ENCODE measurements at regions of chr19 and their contacts with region 1.

Region 1: GRCh38 chr19:43934985-43935708 is at the start of gene ZNF45:
- DNase-seq: peak; percentile 90
- H3K4me3 Mint-ChIP-seq: peak within 1 kb of the TSS; percentile 90
- H3K27ac Mint-ChIP-seq: peak within 1 kb of the TSS; percentile 67
- H3K4me1 Mint-ChIP-seq: peaks cover 5% of the 10 kb centered on the region
- H3K27me3 Mint-ChIP-seq: no peaks in the 10 kb centered on the region
- CTCF ChIP-seq: no peak
- total RNA-seq, gene ZNF45: 8.1 and 9.9 TPM in 2 replicates

Region 2: GRCh38 chr19:43950834-43951645 is 15.9 kb after region 1 on chr19 and contains the start of gene ZNF221:
- CTCF ChIA-PET with region 1: interaction called, 7 read pairs
- POLR2A ChIA-PET with region 1: interaction called, 32 read pairs
- intact Hi-C with region 1: loop called (anchors 1 kb)
- DNase-seq: peak; percentile 97
- H3K4me3 Mint-ChIP-seq: peak within 1 kb of the TSS; percentile 96
- H3K27ac Mint-ChIP-seq: peak within 1 kb of the TSS; percentile 91
- H3K4me1 Mint-ChIP-seq: no peaks in the 10 kb centered on the region
- H3K27me3 Mint-ChIP-seq: peaks cover 11% of the 10 kb centered on the region
- CTCF ChIP-seq: no peak
- total RNA-seq, gene ZNF221: 1.2 and 1.8 TPM in 2 replicates

Region 3: GRCh38 chr19:43983912-43984686 is 49.0 kb after region 1 on chr19 and contains the start of gene ZNF155:
- CTCF ChIA-PET with region 1: no interaction called
- POLR2A ChIA-PET with region 1: interaction called, 3 read pairs
- intact Hi-C with region 1: loop called (anchors 10 kb)
- DNase-seq: peak; percentile 96
- H3K4me3 Mint-ChIP-seq: peak within 1 kb of the TSS; percentile 96
- H3K27ac Mint-ChIP-seq: peak within 1 kb of the TSS; percentile 82
- H3K4me1 Mint-ChIP-seq: no peaks in the 10 kb centered on the region
- H3K27me3 Mint-ChIP-seq: no peaks in the 10 kb centered on the region
- CTCF ChIP-seq: no peak
- total RNA-seq, gene ZNF155: 4.2 and 6.7 TPM in 2 replicates

Region 4: GRCh38 chr19:44071824-44072542 is 136.8 kb after region 1 on chr19 and contains the start of gene ZNF284:
- CTCF ChIA-PET with region 1: no interaction called
- POLR2A ChIA-PET with region 1: no interaction called
- intact Hi-C with region 1: loop called (anchors 1 kb)
- DNase-seq: peak; percentile 92
- H3K4me3 Mint-ChIP-seq: peak within 1 kb of the TSS; percentile 83
- H3K27ac Mint-ChIP-seq: peak within 1 kb of the TSS; percentile 84
- H3K4me1 Mint-ChIP-seq: peaks cover 17% of the 10 kb centered on the region
- H3K27me3 Mint-ChIP-seq: no peaks in the 10 kb centered on the region
- CTCF ChIP-seq: no peak
- total RNA-seq, gene ZNF284: 2.5 and 3.8 TPM in 2 replicates

Region 5: DNA sequence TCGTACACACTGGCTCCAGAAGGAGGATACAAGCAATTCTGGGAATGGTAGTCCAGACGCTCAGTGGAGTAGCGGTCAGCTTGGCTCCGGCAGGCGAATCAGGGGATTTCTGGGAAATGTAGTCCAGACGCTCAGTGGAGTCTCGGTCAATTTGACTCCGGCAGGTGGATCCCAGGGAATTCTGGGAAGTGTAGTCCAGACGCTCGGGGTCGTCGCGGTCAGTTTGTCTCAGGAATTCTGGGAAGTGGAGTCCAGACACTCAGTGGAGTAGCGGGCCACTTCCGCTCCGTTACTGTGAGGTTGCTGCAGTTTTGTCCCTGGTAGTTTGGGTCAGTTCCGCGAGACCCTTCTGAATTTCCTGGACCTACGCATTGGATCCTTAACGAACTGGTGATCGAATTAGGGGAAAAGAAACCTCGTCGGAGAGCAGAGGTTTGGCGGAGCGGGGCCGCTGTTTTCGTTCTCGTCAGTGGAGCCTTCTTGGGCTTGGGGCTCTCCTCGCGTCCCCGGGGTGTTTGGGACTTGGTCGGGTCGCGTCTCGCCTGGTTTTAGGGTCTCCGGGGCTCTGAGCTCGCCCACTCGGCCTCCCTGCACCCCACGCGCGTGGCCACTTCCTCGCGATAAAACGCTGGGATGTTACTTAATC is 178.1 kb after region 1 on chr19 and contains the start of gene ZNF225:
- CTCF ChIA-PET with region 1: interaction called, 4 read pairs
- POLR2A ChIA-PET with region 1: interaction called, 10 read pairs
- intact Hi-C with region 1: no loop called
- DNase-seq: peak; percentile 99
- H3K4me3 Mint-ChIP-seq: peak within 1 kb of the TSS; percentile 86
- H3K27ac Mint-ChIP-seq: peak within 1 kb of the TSS; percentile 57
- H3K4me1 Mint-ChIP-seq: peaks cover 6% of the 10 kb centered on the region
- H3K27me3 Mint-ChIP-seq: no peaks in the 10 kb centered on the region
- CTCF ChIP-seq: no peak
- total RNA-seq, gene ZNF225: 3.6 and 5.7 TPM in 2 replicates

Measured in MCF 10A (cell line).